SK-N-SH (cell line): ENCODE measurements at regions of chr7 and their contacts with region 1.

Region 1: DNA sequence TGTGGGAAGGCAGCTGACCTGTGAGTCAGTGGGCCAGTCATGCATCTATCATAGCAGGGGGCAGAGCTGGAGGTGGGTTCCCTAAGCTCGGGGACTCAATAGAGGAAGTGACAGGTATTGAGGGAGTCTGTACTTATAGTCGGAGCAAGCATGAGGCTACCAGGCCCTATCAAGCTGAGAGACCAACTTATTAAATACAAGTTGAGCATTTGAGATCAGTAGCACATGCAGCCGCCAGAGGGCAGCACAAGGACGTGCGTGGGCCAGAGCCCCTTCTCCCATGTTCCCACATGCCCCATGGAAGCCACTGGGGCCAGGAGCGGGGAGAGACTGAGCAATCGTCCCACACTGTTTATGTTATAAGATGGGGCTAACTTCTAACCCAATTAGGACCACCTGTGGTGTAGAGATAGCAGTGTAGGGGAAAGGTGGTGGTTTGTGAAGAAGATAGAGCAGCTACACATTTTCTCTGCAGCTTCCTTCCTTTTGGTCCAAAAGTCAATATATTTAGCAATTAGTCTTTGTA is 13.0 kb upstream of the STK31 start:
- DNase-seq: peak; percentile 61
- H3K4me3 ChIP-seq: no peak overlapping the region
- H3K27ac ChIP-seq: no peak overlapping the region
- H3K4me1 ChIP-seq: no peaks in the 10 kb centered on the region
- H3K27me3 ChIP-seq: no peaks in the 10 kb centered on the region
- CTCF ChIP-seq: peak; percentile 77
- EP300 ChIP-seq: no peak
- RAD21 ChIP-seq: peak; percentile 54

Region 2: DNA sequence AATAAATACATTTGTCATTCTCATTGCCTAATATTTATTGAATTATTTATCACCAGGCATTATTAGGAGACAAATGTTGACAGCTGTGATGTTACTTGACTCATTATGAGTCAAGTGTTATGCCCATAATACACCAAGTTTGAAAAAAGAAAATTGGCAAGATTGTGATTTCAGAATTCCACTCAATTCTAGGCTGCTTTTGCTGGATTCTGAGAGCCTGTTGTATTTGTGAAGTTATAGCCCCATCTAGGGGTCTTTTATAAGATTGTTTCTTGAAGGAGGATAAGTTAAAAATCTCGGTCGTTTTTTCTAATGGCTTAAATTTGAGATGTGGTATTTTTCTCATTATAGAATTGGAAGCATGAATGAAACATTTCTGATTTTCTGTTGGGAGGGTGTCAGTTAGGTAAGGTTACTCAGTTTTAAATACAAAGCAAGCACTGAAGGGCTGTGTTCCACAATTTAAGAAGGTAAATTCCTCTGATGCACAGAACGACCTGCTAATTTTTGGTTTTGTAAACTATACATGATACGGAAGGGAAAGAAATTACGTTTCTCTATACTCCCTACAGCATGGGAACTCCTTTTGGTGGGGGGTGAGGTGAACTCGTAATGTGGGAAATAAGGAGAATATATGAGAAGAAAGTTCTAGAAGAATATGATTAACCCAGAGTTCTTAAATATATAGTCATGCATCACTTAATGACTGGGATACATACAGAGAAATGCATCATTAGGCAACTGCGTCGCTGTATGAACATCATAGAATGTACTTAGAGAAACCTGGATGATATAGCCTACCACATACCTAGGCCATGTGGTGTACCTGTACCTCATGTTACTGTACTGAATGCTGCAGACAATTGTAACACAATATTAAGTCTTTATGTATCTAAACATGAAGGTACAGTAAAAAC is 15.6 kb after region 1 on chr7:
- CTCF ChIA-PET with region 1: interaction called, 13 read pairs
- POLR2A ChIA-PET with region 1: no interaction called
- DNase-seq: peak; percentile 79
- H3K4me3 ChIP-seq: no peak overlapping the region
- H3K27ac ChIP-seq: no peak overlapping the region
- H3K4me1 ChIP-seq: peaks cover 3 to 14% of the 10 kb centered on the region in 2 experiments; a peak in 2 of 4 replicates
- H3K27me3 ChIP-seq: no peaks in the 10 kb centered on the region
- CTCF ChIP-seq: peak; percentile 89
- EP300 ChIP-seq: no peak
- RAD21 ChIP-seq: peak; percentile 99

Region 3: DNA sequence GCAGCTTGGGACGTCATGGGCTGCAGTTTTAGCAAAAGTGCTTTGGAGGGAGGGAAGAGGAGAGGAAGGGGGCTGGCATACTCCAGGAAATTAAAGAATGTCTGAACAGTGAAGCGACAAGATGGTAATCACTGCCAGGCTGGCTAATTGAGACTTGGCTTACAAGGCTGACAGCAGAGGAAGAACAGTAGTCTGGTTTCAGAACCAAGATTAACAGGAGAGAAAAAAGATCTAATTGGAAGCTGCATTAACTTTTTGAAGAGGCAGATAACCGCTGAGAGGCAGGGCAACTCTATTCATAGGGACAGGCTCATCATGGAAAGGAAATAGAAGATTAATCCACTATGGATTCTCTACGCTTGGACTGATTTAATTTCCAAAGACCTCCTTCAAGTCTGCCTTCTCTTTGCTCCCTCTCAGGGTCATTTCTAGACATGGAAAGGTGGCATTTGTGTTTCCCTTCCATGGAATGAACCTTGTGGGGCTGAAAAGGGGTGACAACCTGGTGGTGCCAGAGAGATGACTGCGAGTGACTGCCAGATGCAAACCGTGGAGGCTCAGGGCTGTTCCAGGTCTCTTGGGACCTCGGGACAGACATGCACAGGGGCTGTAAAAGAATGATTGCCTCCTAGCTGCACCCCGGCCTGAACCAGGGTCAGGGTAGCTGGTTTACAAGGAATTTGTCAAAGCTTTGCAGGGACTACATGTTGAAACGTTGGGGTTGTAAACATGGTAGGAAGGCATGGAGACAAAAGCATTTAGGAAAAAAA is 376.9 kb after region 1 on chr7:
- CTCF ChIA-PET with region 1: no interaction called
- POLR2A ChIA-PET with region 1: no interaction called
- DNase-seq: no peak
- H3K4me3 ChIP-seq: no peak overlapping the region
- H3K27ac ChIP-seq: no peak overlapping the region
- H3K4me1 ChIP-seq: peaks cover 0 to 4% of the 10 kb centered on the region in 2 experiments; a peak in 2 of 4 replicates
- H3K27me3 ChIP-seq: no peaks in the 10 kb centered on the region
- CTCF ChIP-seq: no peak
- EP300 ChIP-seq: no peak
- RAD21 ChIP-seq: no peak